Dendritic cell treated with granulocyte-macrophage colony-stimulating factor and Interleukin-4, amounts not matched to agents 40 ng/mL and 50 ng/mL, for 4 days (primary cell): ENCODE measurements at regions of chr11 and their contacts with region 1.

Region 1: GRCh38 chr11:11318961-11319360 is 34.1 kb downstream of the CSNK2A3 start:
- H3K4me3 Mint-ChIP-seq: no peak overlapping the region
- H3K27ac Mint-ChIP-seq: peak overlapping the region; percentile 97
- H3K4me1 Mint-ChIP-seq: peaks cover 69% of the 10 kb centered on the region
- H3K27me3 Mint-ChIP-seq: no peaks in the 10 kb centered on the region

Region 2: GRCh38 chr11:11370255-11370961 is 51.4 kb after region 1 on chr11:
- intact Hi-C with region 1: loop called (anchors 2 kb)
- H3K4me3 Mint-ChIP-seq: peak overlapping the region; percentile 32
- H3K27ac Mint-ChIP-seq: peak overlapping the region; percentile 97
- H3K4me1 Mint-ChIP-seq: peaks cover 63% of the 10 kb centered on the region
- H3K27me3 Mint-ChIP-seq: peaks cover 8% of the 10 kb centered on the region

Region 3: DNA sequence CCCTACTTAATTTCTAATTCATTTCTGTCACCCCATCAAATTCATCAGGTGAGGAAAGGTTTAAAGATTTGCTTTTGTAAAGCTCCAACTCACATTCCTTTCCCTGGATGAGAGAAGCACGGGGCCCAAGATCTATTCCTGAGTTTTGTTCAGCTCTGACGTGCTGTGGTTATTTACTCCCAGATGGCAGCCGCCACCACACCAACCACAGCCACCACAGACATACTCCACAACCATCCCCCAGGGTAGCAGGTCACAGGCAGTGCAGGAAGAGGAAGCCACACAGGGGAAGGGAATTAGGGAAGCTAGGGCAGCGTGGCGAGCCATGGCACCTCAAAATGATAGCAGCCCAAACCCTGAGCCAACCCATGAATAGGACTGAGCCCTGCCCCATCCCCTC is 97.5 kb after region 1 on chr11:
- intact Hi-C with region 1: loop called (anchors 2 kb)
- H3K4me3 Mint-ChIP-seq: no peak overlapping the region
- H3K27ac Mint-ChIP-seq: peak overlapping the region; percentile 70
- H3K4me1 Mint-ChIP-seq: peaks cover 96% of the 10 kb centered on the region
- H3K27me3 Mint-ChIP-seq: peaks cover 61% of the 10 kb centered on the region